H1 (cell line): ENCODE measurements at regions of chr19 and their contacts with region 1.

Region 1: DNA sequence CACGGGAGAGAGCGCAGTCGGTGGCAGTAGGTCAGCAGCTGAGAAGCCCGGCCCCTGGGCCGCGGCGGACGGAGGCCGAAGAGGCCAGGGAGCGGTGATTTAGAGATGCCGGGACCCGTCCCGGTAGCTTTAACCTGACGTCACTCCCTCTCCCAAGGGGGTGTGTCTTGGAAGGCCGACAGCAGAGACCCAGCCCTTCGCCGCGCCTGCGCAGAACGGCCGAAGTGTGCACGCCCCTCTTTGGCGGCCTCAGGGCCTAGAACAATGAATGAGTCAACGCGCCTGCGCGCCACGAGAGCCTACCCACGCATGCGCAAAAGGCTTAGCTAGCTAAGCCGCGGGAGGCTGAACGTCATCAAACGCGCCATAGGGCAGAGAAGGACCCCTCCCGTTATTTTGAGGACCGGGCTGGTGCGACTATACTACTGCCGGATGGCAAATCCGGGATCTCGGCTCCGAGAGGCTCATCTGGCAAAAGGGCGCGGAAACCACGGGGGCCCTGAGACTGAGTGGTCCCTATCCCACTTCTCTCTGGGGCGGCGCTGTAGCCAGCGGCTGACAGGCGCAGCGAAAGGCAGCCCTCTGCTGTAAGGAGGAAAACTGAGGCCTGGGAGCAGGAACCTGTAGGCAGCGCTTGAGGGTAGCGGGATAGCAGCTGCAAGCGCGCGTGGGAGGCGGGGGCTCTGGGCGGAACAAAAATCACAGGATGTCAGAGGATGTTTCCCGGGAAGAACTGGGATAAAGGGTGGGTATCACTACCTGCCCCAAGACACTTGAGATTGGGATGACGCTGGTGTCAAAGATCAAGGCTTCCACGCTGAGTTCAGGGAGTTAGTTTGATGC is at the starts of genes IRGQ and ZNF576:
- DNase-seq: peak; percentile 100
- H3K4me3 ChIP-seq: peak within 1 kb of the TSS; percentile 79 to 90 (median 86)
- H3K27ac ChIP-seq: peak within 1 kb of the TSS; percentile 97
- H3K4me1 ChIP-seq: peaks cover 2 to 6% (median 3%) of the 10 kb centered on the region in 4 experiments; a peak in 6 of 7 replicates
- H3K27me3 ChIP-seq: no peaks in the 10 kb centered on the region
- CTCF ChIP-seq: peak in 2 of 3 experiments; percentile 3 to 7; a peak in 1 of 4 replicates
- EP300 ChIP-seq: no peak
- POLR2A ChIP-seq: peak in 1 of 2 experiments; percentile 66; a peak in 2 of 3 replicates
- RAD21 ChIP-seq: peak; percentile 4 to 32; a peak in 2 of 4 replicates
- total RNA-seq, gene IRGQ: 39.9 and 42.9 TPM in 2 replicates
- total RNA-seq, gene ZNF576: 13.6 and 14.7 TPM in 2 replicates

Region 2: GRCh38 chr19:43555185-43555770 is 40.9 kb before region 1 on chr19:
- CTCF ChIA-PET with region 1: interaction called, 92 read pairs
- POLR2A ChIA-PET with region 1: interaction called, 5 read pairs
- DNase-seq: peak; percentile 61 to 95
- H3K4me3 ChIP-seq: no peak overlapping the region
- H3K27ac ChIP-seq: no peak overlapping the region
- H3K4me1 ChIP-seq: 0 out of 7 replicates have a peak, but pooled peaks cover 0 to 2% (median 0%) of the 10 kb centered on the region in 4 experiments
- H3K27me3 ChIP-seq: no peaks in the 10 kb centered on the region
- CTCF ChIP-seq: peak; percentile 85 to 98 (median 93)
- EP300 ChIP-seq: no peak
- POLR2A ChIP-seq: no peak
- RAD21 ChIP-seq: peak; percentile 68 to 81

Region 3: GRCh38 chr19:43570174-43570791 is 25.9 kb before region 1 on chr19:
- CTCF ChIA-PET with region 1: interaction called, 26 read pairs
- POLR2A ChIA-PET with region 1: interaction called, 36 read pairs
- DNase-seq: no peak
- H3K4me3 ChIP-seq: no peak overlapping the region
- H3K27ac ChIP-seq: 0 out of 2 replicates have a peak overlapping the region, but pooled peaks have one; percentile 38
- H3K4me1 ChIP-seq: peaks cover 0 to 9% (median 4%) of the 10 kb centered on the region in 4 experiments; a peak in 4 of 7 replicates
- H3K27me3 ChIP-seq: no peaks in the 10 kb centered on the region
- CTCF ChIP-seq: no peak
- EP300 ChIP-seq: peak in 1 of 2 experiments; percentile 59; a peak in 1 of 3 replicates
- POLR2A ChIP-seq: no peak
- RAD21 ChIP-seq: no peak

Region 4: DNA sequence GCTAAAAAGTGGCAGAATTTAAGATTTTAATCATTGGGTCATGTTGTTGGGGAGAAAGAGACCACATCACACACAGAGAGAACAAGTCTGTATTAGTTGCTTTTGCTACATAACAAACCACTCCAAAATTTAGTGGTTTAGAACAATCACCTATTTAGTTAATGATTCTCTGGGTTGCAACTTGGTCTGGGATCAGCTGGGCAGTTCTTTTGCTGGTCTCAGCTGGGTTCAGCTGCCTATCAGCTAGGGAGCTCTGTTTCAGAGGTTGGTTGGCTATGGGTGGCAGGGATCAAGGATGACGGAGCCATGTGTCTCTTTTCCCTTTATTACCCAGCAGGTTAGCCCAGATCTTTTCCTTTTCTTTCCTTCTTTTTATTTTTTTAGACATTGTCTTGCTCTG is 11.7 kb before region 1 on chr19:
- CTCF ChIA-PET with region 1: interaction called, 45 read pairs
- POLR2A ChIA-PET with region 1: interaction called, 22 read pairs
- DNase-seq: no peak
- H3K4me3 ChIP-seq: no peak overlapping the region
- H3K27ac ChIP-seq: no peak overlapping the region
- H3K4me1 ChIP-seq: peaks cover 0 to 7% (median 3%) of the 10 kb centered on the region in 4 experiments; a peak in 5 of 7 replicates
- H3K27me3 ChIP-seq: no peaks in the 10 kb centered on the region
- CTCF ChIP-seq: no peak
- EP300 ChIP-seq: no peak
- POLR2A ChIP-seq: no peak
- RAD21 ChIP-seq: no peak

Region 5: DNA sequence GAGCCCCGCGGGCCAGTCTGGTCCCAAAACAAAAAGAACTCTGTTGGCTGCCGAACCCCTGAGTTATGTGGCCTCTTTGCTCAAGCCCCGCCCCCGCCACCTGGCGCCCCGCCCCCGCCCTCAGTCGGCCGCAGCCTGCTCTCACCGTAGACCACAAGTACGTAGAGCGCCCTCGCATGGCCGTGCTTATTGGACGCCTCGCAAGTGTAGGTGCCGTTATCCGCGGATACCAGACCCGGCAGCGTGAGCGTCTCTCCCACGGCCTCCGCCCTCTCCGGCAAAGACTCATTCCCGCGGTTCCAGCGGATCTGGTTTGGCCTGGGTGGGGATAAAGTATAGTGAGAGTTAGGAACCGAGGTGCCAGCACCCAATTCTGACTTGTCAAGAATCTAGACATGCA is 28.7 kb after region 1 on chr19:
- CTCF ChIA-PET with region 1: interaction called, 30 read pairs
- POLR2A ChIA-PET with region 1: interaction called, 12 read pairs
- DNase-seq: peak in 1 of 2 experiments; percentile 96
- H3K4me3 ChIP-seq: no peak overlapping the region
- H3K27ac ChIP-seq: no peak overlapping the region
- H3K4me1 ChIP-seq: peaks cover 2 to 9% (median 8%) of the 10 kb centered on the region in 4 experiments; a peak in 5 of 7 replicates
- H3K27me3 ChIP-seq: no peaks in the 10 kb centered on the region
- CTCF ChIP-seq: peak; percentile 68 to 91 (median 78)
- EP300 ChIP-seq: no peak
- POLR2A ChIP-seq: no peak
- RAD21 ChIP-seq: peak; percentile 48 to 65

Region 6: DNA sequence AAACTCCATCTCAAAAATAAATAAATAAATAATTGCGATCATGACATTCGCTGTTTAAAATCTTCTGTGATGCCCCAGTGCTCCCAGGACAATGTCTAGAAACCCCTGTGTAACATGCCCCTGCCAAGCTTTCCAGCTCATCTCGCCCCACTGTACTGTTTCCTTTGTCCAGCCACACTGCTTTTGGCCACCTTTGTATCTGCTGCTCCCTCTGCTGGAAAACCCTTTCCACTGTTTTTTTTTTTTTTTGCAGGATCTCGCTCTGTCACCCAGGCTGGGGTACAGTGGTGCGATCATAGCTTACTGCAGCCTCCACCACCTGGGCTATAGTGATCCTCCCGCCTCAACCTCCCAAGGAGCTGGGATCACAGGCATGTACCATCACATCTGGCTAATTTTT is 66.3 kb after region 1 on chr19:
- CTCF ChIA-PET with region 1: interaction called, 12 read pairs
- POLR2A ChIA-PET with region 1: interaction called, 4 read pairs
- DNase-seq: peak in 1 of 2 experiments; percentile 46
- H3K4me3 ChIP-seq: no peak overlapping the region
- H3K27ac ChIP-seq: no peak overlapping the region
- H3K4me1 ChIP-seq: peaks cover 0 to 6% (median 4%) of the 10 kb centered on the region in 4 experiments; a peak in 4 of 7 replicates
- H3K27me3 ChIP-seq: no peaks in the 10 kb centered on the region
- CTCF ChIP-seq: peak; percentile 27 to 57 (median 40)
- EP300 ChIP-seq: no peak
- POLR2A ChIP-seq: no peak
- RAD21 ChIP-seq: peak; percentile 28 to 41